PC-3 (cell line): ENCODE measurements at regions of chr3 and their contacts with region 1.

Region 1: GRCh38 chr3:33167716-33168336 is 50.8 kb downstream of the SUSD5 start:
- DNase-seq: no peak
- ATAC-seq: no peak; the same call in 1 of the 2 replicates
- H3K4me3 ChIP-seq: no peak overlapping the region
- H3K27ac ChIP-seq: no peak overlapping the region
- H3K4me1 ChIP-seq: no peaks in the 10 kb centered on the region
- H3K27me3 ChIP-seq: no peaks in the 10 kb centered on the region
- CTCF ChIP-seq: no peak

Region 2: GRCh38 chr3:33131331-33132018 is 36.4 kb before region 1 on chr3:
- CTCF ChIA-PET with region 1: no interaction called
- POLR2A ChIA-PET with region 1: no interaction called
- intact Hi-C with region 1: no loop called
- DNase-seq: peak; percentile 85
- ATAC-seq: peak; percentile 83
- H3K4me3 ChIP-seq: no peak overlapping the region
- H3K27ac ChIP-seq: no peak overlapping the region
- H3K4me1 ChIP-seq: 0 out of 2 replicates have a peak, but pooled peaks cover 3% of the 10 kb centered on the region
- H3K27me3 ChIP-seq: no peaks in the 10 kb centered on the region
- CTCF ChIP-seq: peak; percentile 94

Region 3: GRCh38 chr3:33202711-33203457 is 35.1 kb after region 1 on chr3:
- CTCF ChIA-PET with region 1: no interaction called
- POLR2A ChIA-PET with region 1: no interaction called
- intact Hi-C with region 1: loop called (anchors 2 kb)
- DNase-seq: peak; percentile 12
- ATAC-seq: peak; percentile 93
- H3K4me3 ChIP-seq: no peak overlapping the region
- H3K27ac ChIP-seq: no peak overlapping the region
- H3K4me1 ChIP-seq: no peaks in the 10 kb centered on the region
- H3K27me3 ChIP-seq: no peaks in the 10 kb centered on the region
- CTCF ChIP-seq: no peak

Region 4: DNA sequence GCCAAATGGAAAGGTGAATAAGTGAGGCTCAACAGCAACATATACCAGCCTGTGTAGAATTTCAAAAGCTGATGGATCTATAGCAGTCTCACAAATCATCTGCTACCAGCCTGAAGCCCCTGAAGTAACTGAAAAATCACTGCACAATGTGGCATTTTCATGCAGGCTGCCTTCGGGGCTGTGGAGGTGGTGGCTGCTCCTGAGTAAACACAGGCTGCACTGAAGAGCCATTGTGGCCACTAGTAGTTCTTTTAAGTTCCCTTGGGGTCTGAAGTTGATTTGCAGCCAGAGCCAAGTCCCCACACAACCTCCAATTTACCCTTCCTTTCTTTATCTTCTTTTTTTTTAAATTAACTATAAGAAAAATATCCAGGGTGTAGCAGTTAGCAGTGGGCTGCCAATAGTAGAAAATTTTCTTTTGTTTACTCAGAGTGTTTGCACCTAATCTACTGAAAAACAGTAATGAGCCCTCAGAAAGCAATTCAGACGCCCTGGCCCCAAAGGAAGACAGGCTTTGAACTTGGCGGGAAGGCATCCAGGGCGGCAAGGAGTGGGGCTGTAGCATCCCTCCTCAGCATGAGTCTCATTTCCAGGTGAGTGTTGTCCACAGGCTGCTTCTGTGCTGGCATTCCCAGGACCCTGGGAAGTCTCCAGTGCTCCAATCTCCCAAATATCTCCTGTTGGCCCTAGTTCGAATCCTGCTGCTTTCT is 64.1 kb after region 1 on chr3:
- CTCF ChIA-PET with region 1: no interaction called
- POLR2A ChIA-PET with region 1: no interaction called
- intact Hi-C with region 1: no loop called
- DNase-seq: no peak
- ATAC-seq: no peak
- H3K4me3 ChIP-seq: no peak overlapping the region
- H3K27ac ChIP-seq: no peak overlapping the region
- H3K4me1 ChIP-seq: no peaks in the 10 kb centered on the region
- H3K27me3 ChIP-seq: no peaks in the 10 kb centered on the region
- CTCF ChIP-seq: no peak